ENCODE measurements at regions of chr10 and their contacts with region 1.

Region 1: DNA sequence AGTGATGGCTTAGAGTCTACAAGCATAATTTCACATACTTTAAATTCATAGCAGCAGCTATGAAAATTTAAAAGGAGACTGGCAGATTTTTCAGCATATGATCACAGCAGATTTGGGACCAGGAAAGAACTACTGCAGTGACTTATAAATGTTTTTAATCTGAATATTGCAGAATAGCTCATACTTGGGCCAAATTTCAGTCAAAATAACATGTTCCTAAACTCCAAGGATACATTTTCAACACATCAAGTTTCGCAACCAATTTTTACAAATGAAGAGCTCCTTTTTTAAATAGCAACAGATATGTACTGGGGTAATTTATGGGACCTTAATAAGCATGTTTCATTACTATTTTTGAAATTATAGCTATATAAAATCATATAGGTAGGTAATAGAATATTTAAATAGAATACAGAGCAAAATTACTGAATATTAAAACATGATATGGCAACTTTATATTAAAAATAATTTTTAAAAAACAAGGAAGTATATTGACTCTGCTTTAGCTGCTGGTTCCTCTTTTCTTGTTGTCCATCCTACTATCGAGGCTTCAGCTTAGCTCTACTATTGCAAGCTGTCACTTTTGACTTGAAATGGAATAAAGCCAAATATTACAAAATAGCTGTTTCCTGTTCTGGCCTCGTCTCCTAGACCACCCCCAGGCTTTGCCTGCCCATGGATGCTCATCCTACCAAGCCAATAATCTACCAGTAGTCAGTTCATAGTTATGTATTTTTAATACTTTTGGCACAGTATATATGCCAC is 123.1 kb downstream of the NRBF2 start:
- DNase-seq: no peak
- ATAC-seq: peak; percentile 54 to 79 (median 75)
- H3K4me3 ChIP-seq: peak overlapping the region in 1 of 10 donors; percentile 4
- H3K27ac ChIP-seq: peak overlapping the region in 7 of 10 donors; percentile 0 to 57 (median 26)
- H3K4me1 ChIP-seq: peaks cover 18 to 96% (median 84%) of the 10 kb centered on the region in 9 donors
- H3K27me3 ChIP-seq: no peaks in the 10 kb centered on the region
- CTCF ChIP-seq: no peak

Region 2: GRCh38 chr10:63217120-63217605 is 39.0 kb before region 1 on chr10:
- intact Hi-C with region 1: loop called in 2 of 10 experiments (anchors 5 to 10 kb)
- DNase-seq: peak in 1 of 2 donors; percentile 30
- ATAC-seq: peak; percentile 62 to 82 (median 77)
- H3K4me3 ChIP-seq: no peak overlapping the region
- H3K27ac ChIP-seq: peak overlapping the region in 4 of 10 donors; percentile 1 to 40 (median 14)
- H3K4me1 ChIP-seq: peaks cover 0 to 63% (median 43%) of the 10 kb centered on the region in 9 donors
- H3K27me3 ChIP-seq: no peaks in the 10 kb centered on the region
- CTCF ChIP-seq: peak; percentile 46 to 86 (median 70)